Caco-2 (cell line): ENCODE measurements at regions of chr1 and their contacts with region 1.

Region 1: DNA sequence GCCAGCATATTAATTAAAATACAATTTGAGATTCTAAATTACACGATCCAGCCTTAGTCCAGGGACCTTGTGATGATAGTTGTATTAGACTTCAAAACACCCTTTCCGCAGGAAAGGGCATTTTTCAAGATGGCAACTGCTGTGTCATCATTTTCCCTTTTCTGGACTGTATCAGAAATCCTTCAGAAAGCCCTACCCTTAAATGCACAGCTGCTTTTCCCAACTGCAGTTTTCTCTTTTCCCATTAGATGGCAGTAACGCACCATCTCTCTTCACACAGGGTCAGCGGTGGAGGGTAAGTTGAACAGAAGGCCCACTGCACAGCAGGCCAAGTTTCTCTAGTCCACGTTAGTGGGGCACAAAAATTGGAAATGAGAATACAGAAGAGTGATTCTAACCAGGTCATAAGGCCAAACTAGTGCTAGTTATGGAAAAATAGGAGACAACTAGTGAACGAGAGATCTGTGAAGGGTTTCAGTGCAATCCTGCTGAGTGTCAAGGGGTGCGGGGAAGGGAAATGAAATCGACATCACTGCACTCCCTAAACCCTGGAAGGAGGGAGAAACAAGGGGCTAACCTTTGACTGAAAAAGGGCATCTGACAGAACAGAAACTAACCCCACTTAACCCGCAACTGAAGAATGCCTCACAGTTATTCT is 22.1 kb upstream of the TDRD10 start:
- DNase-seq: peak; percentile 66 to 86
- H3K4me3 ChIP-seq: no peak overlapping the region
- H3K4me3 Mint-ChIP-seq: no peak overlapping the region
- H3K27ac Mint-ChIP-seq: no peak overlapping the region
- H3K4me1 ChIP-seq: no peaks in the 10 kb centered on the region
- H3K4me1 Mint-ChIP-seq: no peaks in the 10 kb centered on the region
- H3K27me3 ChIP-seq: no peaks in the 10 kb centered on the region
- H3K27me3 Mint-ChIP-seq: no peaks in the 10 kb centered on the region
- CTCF ChIP-seq: peak; percentile 78 to 85

Region 2: GRCh38 chr1:154352581-154353459 is 127.1 kb before region 1 on chr1:
- CTCF ChIA-PET with region 1: no interaction called
- POLR2A ChIA-PET with region 1: no interaction called
- intact Hi-C with region 1: loop called (anchors 5 kb)
- DNase-seq: peak; percentile 73 to 81
- H3K4me3 ChIP-seq: peak overlapping the region; percentile 43
- H3K4me3 Mint-ChIP-seq: peak overlapping the region; percentile 86
- H3K27ac Mint-ChIP-seq: peak overlapping the region; percentile 86
- H3K4me1 ChIP-seq: peaks cover 25% of the 10 kb centered on the region
- H3K4me1 Mint-ChIP-seq: peaks cover 20% of the 10 kb centered on the region
- H3K27me3 ChIP-seq: no peaks in the 10 kb centered on the region
- H3K27me3 Mint-ChIP-seq: no peaks in the 10 kb centered on the region
- CTCF ChIP-seq: no peak

Region 3: GRCh38 chr1:154419620-154420571 is 60.0 kb before region 1 on chr1:
- CTCF ChIA-PET with region 1: no interaction called
- POLR2A ChIA-PET with region 1: no interaction called
- intact Hi-C with region 1: loop called (anchors 2 kb)
- DNase-seq: no peak
- H3K4me3 ChIP-seq: no peak overlapping the region
- H3K4me3 Mint-ChIP-seq: no peak overlapping the region
- H3K27ac Mint-ChIP-seq: peak overlapping the region; percentile 66
- H3K4me1 ChIP-seq: peaks cover 19% of the 10 kb centered on the region
- H3K4me1 Mint-ChIP-seq: peaks cover 9% of the 10 kb centered on the region
- H3K27me3 ChIP-seq: no peaks in the 10 kb centered on the region
- H3K27me3 Mint-ChIP-seq: no peaks in the 10 kb centered on the region
- CTCF ChIP-seq: no peak

Region 4: DNA sequence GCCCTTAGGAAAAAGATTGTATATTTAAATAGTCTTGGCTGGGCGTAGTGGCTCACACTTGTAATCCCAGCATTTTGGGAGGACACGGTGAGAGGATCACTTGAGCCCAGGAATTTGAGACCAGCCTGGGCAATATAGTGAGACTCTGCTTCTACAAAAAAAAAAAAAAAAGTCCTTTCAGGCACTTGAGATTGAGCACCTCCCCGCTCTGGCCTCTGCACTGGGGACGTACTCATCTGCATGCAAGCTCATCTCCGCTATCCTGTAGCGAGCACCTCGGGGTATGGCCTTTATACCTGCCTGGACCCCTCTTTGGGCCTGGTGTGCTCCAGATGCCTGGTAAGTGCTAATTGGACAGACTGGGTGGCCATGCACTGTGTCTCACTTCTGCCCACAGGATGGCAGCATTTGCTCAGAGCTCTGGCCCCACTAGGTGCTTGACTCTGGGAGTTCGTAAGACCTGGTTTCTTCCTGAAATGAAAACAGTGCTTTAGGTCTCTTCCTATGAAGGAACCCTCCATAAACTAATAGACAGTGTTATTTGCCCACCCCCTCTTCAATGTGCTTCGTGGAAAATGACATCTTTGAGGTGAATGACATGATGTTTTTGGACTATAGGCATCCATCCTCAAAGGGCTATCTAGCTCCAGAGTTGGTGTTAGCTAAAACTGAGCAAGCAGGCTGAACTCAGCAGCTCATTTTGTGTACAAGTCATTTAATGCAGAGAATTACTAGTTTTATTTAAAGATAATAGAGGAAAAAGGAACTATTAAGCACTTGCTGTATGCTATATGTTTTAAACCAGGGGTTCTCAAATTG is 189.8 kb after region 1 on chr1:
- CTCF ChIA-PET with region 1: no interaction called
- POLR2A ChIA-PET with region 1: no interaction called
- intact Hi-C with region 1: loop called (anchors 2 kb)
- DNase-seq: peak; percentile 74 to 75
- H3K4me3 ChIP-seq: no peak overlapping the region
- H3K4me3 Mint-ChIP-seq: no peak overlapping the region
- H3K27ac Mint-ChIP-seq: no peak overlapping the region
- H3K4me1 ChIP-seq: no peaks in the 10 kb centered on the region
- H3K4me1 Mint-ChIP-seq: no peaks in the 10 kb centered on the region
- H3K27me3 ChIP-seq: no peaks in the 10 kb centered on the region
- H3K27me3 Mint-ChIP-seq: peaks cover 3% of the 10 kb centered on the region
- CTCF ChIP-seq: peak; percentile 77 to 87

Region 5: GRCh38 chr1:154870115-154870571 is 390.2 kb after region 1 on chr1 and contains the start of gene KCNN3:
- CTCF ChIA-PET with region 1: no interaction called
- POLR2A ChIA-PET with region 1: no interaction called
- intact Hi-C with region 1: loop called (anchors 10 kb)
- DNase-seq: peak; percentile 92 to 94
- H3K4me3 ChIP-seq: no peak within 1 kb of the TSS; the same call in 1 of the 2 replicates
- H3K4me3 Mint-ChIP-seq: peak within 1 kb of the TSS; percentile 41
- H3K27ac Mint-ChIP-seq: no peak within 1 kb of the TSS
- H3K4me1 ChIP-seq: no peaks in the 10 kb centered on the region
- H3K4me1 Mint-ChIP-seq: peaks cover 7% of the 10 kb centered on the region
- H3K27me3 ChIP-seq: peaks cover 2% of the 10 kb centered on the region; the same call in 1 of the 2 replicates
- H3K27me3 Mint-ChIP-seq: peaks cover 19% of the 10 kb centered on the region
- CTCF ChIP-seq: no peak
- total RNA-seq, gene KCNN3: 0.05 TPM in 1 of 2 replicates, not detected in the other